GM13977 (cell line): ENCODE measurements at regions of chr3 and their contacts with region 1.

Region 1: DNA sequence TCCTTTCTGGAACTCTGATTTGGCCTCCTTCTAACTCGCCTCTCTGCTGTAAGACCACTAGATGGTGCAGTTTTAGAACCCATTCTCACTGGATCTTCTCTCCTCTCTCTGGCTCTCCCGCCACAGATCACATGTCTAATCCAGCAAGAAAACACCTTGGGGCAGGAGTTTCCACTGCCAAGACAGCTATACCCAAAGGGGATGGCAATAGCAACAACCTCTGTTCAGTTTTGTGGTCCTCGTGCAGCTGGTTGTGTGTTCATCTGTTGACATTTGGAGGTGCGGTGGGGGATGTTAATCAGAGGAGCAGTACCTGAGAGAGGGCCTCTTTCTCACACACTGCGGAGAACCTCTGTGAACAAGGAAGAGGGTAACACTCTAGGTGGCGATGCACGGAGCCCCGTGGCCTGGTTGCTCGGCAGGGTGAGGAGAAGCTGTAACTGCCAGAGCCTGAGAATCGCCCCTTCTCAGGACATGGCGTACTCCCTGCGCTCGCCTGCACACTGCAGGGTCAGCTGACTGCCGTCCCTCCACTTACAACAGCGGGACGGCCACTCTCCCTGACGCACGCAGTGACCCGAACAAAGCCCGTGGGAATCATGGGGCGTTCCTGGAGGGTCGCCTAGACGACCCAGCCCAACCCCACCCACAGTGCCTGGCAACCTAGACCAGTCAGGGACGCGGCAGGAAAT is at the start of gene TEX55:
- DNase-seq: peak; percentile 58
- CTCF ChIP-seq: peak; percentile 60

Region 2: DNA sequence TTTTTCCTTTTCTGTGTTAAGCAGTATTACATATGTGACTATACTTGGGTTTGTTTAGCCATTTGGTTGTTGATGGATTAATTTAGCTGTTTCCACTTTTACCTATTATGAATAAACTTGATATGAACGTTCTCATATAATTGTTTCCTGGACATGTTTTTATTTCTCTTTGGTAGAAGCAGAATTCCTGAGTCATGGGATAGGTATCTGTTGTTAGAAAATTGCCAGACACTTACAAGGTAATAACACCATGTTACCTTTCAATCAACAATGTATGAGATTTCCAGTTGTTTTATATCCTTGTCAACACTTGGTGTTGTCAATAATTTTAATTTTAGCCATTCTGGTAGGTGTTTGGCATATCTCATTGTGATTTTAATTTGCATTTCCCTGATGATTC is 586.4 kb before region 1 on chr3:
- in situ Hi-C with region 1: no loop called
- DNase-seq: no peak
- CTCF ChIP-seq: no peak

Region 3: GRCh38 chr3:119676771-119677640 is 531.4 kb after region 1 on chr3 and contains the start of gene COX17:
- in situ Hi-C with region 1: loop called (anchors 25 kb)
- DNase-seq: peak; percentile 94
- CTCF ChIP-seq: no peak